Cardiac septum (tissue), 1 donor: ENCODE measurements at regions of chr2 and their contacts with region 1.

Region 1: GRCh38 chr2:201432038-201432620 is 19.1 kb downstream of the TRAK2 start:
- DNase-seq: no peak

Region 2: DNA sequence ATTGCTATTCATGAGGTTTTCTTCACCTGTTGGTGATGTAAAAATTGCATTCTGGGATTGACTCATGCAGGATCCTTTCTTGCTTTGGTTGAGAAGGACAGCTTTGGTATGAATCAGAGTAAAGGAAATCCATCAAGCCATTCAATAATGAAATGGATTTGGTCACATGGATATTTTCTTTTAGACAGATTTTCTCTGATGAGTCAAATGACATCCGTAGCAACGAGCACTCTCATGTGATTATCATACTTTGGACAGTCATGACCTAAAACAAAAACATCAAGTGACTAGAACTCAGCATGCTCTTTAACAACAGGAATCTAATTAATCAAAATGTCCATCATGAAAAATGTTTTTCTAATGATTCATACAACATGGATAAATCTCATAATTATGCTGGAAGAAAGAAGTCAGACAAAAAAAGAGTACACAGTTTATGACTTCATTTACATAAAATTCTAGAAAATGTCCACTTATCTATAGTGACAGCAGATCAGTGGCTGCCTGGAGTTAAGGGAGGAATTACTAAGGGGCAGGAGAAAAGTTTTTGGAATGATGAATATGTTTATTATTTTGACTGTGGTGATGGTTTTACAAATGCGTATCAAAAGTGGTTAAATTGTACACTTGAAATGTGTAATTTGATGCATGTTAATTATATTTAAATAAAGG is 11.6 kb before region 1 on chr2:
- intact Hi-C with region 1: loop called (anchors 1 kb)
- DNase-seq: no peak

Region 3: GRCh38 chr2:201500534-201500933 is 68.4 kb after region 1 on chr2:
- intact Hi-C with region 1: no loop called
- DNase-seq: no peak